ENCODE measurements at regions of chr7 and their contacts with region 1.

Region 1: GRCh38 chr7:90351987-90352386 is 5.5 kb downstream of the GTPBP10 start:
- DNase-seq: no peak
- H3K4me3 ChIP-seq: no peak overlapping the region
- H3K27ac ChIP-seq: no peak overlapping the region
- H3K4me1 ChIP-seq: peaks cover 2% of the 10 kb centered on the region
- H3K27me3 ChIP-seq: no peaks in the 10 kb centered on the region
- CTCF ChIP-seq: no peak

Region 2: DNA sequence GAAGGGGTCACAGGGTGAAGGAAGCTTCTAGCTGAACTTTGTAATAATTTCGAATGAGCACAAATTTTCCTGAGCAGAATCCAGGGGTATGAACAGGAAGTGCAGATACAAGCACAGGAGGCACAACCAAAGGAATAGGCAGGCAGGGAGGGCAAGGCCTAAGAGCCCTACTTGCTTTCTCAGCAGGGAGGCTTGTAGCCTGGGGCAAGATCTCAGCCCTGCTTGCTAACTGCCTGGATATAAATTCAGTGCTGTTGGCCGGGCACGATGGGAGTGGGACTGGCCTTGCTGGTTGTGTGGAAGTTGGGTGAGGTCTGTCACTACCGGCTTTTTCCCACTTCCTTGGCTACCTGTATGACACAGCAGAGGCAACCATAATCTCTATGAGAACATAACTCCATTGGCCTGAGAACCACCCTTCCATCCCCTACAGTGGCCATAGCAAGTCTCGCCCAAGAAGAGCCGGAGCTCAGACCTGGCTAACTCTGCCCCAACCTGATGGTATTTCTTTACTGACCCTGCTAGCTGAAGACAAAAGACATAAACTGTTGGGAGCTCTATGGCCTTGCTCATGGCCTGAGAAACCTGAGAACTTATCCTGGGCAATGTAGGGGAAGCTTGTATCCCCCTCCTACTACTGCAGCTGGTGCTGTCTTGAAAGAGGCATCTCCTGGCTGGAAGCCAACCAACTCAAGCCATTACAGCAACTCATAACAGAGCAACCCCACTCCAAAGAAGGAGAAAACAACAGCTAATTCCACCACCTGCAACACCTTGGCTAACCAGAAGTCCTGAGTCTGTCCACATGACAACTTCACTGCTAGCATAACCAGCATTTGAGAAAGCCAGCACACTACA is 78.9 kb after region 1 on chr7:
- CTCF ChIA-PET with region 1: no interaction called
- dilution Hi-C with region 1: loop called (anchors 5 kb)
- in situ Hi-C with region 1: no loop called
- intact Hi-C with region 1: no loop called
- DNase-seq: no peak
- H3K4me3 ChIP-seq: no peak overlapping the region
- H3K27ac ChIP-seq: no peak overlapping the region
- H3K4me1 ChIP-seq: peaks cover 13% of the 10 kb centered on the region
- H3K27me3 ChIP-seq: no peaks in the 10 kb centered on the region
- CTCF ChIP-seq: no peak

Region 3: DNA sequence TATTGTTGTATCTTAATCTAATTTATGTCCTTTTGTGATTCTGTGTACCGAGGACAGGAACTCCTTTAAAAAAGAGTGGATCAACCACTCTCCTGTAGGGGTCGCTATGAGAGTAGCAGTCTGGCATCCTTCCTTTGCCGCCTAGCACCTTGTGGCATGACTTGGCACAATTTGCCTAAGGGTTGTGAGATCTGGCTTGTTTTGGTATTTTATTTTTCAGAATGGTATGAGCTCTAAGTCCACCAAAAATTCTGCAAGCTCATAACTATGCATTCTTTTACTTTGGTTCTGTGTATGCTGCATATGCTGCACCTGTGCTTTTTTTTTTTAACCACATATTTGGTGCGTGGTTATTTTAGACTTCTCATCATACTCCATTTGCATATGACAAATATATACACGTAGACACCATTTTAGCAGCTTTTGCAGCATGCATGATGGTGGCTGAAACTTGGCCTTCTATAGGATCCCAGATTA is 356.9 kb after region 1 on chr7:
- CTCF ChIA-PET with region 1: no interaction called
- dilution Hi-C with region 1: no loop called
- in situ Hi-C with region 1: no loop called
- intact Hi-C with region 1: no loop called
- DNase-seq: no peak
- H3K4me3 ChIP-seq: no peak overlapping the region
- H3K27ac ChIP-seq: no peak overlapping the region
- H3K4me1 ChIP-seq: peaks cover 7% of the 10 kb centered on the region
- H3K27me3 ChIP-seq: no peaks in the 10 kb centered on the region
- CTCF ChIP-seq: peak; percentile 51 to 56

Region 4: GRCh38 chr7:90766814-90767564 is 415.0 kb after region 1 on chr7:
- CTCF ChIA-PET with region 1: no interaction called
- dilution Hi-C with region 1: no loop called
- in situ Hi-C with region 1: no loop called
- intact Hi-C with region 1: no loop called
- DNase-seq: peak; percentile 80
- H3K4me3 ChIP-seq: peak overlapping the region in 1 of 3 experiments; percentile 19
- H3K27ac ChIP-seq: peak overlapping the region; percentile 11
- H3K4me1 ChIP-seq: peaks cover 19% of the 10 kb centered on the region
- H3K27me3 ChIP-seq: no peaks in the 10 kb centered on the region
- CTCF ChIP-seq: no peak